ENCODE measurements at regions of chr10 and their contacts with region 1.

Region 1: GRCh38 chr10:62816331-62817120 is at the start of gene EGR2:
- DNase-seq: peak; percentile 92
- H3K4me3 ChIP-seq: peak within 1 kb of the TSS; percentile 71 to 73
- H3K27ac ChIP-seq: peak within 1 kb of the TSS in 1 of 2 experiments; percentile 72; a peak in 2 of 4 replicates
- H3K4me1 ChIP-seq: peaks cover 12 to 28% of the 10 kb centered on the region in 2 experiments; a peak in 3 of 4 replicates
- H3K27me3 ChIP-seq: peaks cover 49% of the 10 kb centered on the region
- CTCF ChIP-seq: no peak
- EP300 ChIP-seq: no peak
- RAD21 ChIP-seq: no peak
- polyA plus RNA-seq, gene EGR2: 0.25 and 0.47 TPM in 2 replicates

Region 2: GRCh38 chr10:62422068-62422590 is 394.4 kb before region 1 on chr10:
- CTCF ChIA-PET with region 1: no interaction called
- POLR2A ChIA-PET with region 1: no interaction called
- DNase-seq: no peak
- H3K4me3 ChIP-seq: no peak overlapping the region
- H3K27ac ChIP-seq: peak overlapping the region in 1 of 2 experiments; percentile 78; a peak in 3 of 4 replicates
- H3K4me1 ChIP-seq: peaks cover 0 to 18% of the 10 kb centered on the region in 2 experiments; a peak in 1 of 4 replicates
- H3K27me3 ChIP-seq: no peaks in the 10 kb centered on the region
- CTCF ChIP-seq: peak; percentile 42
- EP300 ChIP-seq: peak in 1 of 2 experiments; percentile 78; a peak in 2 of 4 replicates
- RAD21 ChIP-seq: no peak

Region 3: DNA sequence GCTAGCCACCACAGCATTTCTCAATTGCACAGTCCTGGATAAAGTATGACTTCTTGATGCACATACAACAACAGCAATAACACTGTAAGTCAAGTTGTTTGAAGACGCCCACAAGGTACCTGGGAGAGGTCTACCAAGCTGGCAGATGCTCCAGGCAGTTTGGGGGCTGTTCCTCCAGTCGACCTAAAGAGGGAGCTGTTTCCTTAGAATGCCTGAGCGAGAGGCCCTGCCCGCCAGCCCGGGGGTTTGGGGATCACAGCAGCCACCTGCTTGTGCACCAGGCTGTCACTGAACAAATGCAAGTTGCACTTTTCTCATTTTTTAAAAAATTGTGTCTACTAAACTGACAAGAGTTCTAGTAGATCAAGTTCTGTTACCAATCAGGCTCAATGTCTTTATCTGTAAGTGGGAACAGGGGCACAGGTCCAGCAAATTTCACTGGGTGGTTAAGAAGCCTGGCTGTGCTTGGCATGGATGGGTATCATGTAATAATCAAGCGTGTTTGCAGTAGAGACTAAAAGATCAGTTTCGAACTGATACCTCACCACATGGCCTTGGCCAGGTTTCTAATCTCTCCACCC is 205.8 kb before region 1 on chr10:
- CTCF ChIA-PET with region 1: interaction called, 42 read pairs
- POLR2A ChIA-PET with region 1: no interaction called
- DNase-seq: peak; percentile 73
- H3K4me3 ChIP-seq: no peak overlapping the region
- H3K27ac ChIP-seq: no peak overlapping the region
- H3K4me1 ChIP-seq: no peaks in the 10 kb centered on the region
- H3K27me3 ChIP-seq: no peaks in the 10 kb centered on the region
- CTCF ChIP-seq: peak; percentile 78
- EP300 ChIP-seq: no peak
- RAD21 ChIP-seq: peak; percentile 79

Region 4: DNA sequence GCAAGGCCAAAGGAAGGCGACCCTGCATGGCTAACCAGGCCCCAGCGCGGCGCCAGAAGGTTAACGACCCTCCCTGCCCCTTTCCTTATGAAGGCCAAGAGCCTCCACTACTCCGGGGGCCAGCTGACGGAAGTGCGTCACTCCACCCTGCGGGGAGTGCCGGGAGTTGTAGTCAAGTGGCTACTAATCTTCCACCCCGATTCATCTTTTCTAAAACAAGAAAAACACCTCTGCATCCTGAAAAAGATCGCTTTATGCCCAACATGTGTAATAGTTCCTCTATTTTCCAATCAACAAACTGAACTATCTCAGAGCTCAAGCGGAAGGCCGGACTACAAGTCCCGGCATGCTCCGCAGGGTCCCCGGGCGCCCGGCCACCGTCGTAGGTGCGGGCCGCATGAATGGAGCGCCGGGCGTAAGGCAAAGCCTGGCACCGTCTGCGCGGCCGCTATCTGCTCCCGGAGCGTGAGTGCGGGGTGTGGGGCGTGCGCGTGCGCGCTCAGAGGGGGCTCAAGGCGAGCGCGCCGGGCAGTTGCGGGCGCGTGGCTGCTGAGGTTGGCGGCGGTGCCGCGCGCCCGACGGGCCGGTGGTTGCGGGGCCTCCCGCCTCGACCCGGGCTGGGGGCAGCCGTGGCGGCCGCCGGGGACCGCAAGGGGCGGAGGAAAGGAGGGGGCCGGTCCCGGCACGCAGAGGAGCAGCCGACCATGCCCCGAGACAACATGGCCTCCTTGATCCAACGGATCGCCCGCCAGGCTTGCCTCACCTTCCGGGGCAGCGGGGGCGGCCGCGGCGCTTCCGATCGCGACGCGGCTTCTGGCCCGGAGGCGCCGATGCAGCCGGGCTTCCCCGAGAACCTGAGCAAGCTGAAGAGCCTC is 11.9 kb before region 1 on chr10 and contains the start of gene ADO:
- CTCF ChIA-PET with region 1: interaction called, 27 read pairs
- POLR2A ChIA-PET with region 1: interaction called, 8 read pairs
- DNase-seq: peak; percentile 95
- H3K4me3 ChIP-seq: peak within 1 kb of the TSS; percentile 75 to 94
- H3K27ac ChIP-seq: peak within 1 kb of the TSS; percentile 90 to 99
- H3K4me1 ChIP-seq: peaks cover 18% of the 10 kb centered on the region in 2 experiments; a peak in 3 of 4 replicates
- H3K27me3 ChIP-seq: no peaks in the 10 kb centered on the region; the same call in 1 of the 2 replicates
- CTCF ChIP-seq: no peak
- EP300 ChIP-seq: no peak; a peak in 1 of 4 replicates
- RAD21 ChIP-seq: no peak
- polyA plus RNA-seq, gene ADO: 6.9 and 8.2 TPM in 2 replicates